A673 (cell line): ENCODE measurements at regions of chr6 and their contacts with region 1.

Region 1: DNA sequence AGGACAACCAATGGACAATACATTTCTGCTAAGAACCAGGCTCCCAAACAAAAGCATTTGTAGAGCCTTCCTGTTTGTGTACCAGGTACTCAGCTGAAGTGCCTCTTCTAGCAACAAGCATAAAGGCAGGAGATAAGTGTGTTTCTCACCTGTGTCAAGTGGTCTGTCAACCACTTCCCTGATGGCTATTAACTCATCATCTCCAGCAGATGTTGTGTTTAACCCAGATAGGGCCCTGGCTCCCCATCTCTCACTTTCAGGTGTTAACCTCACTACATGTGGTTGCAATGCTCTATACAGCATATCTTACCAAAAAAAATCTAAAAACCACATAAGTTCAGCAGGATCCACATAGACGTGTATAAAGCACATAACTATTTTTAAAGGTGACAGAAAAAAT is 9.6 kb upstream of the IL17A start:
- DNase-seq: no peak
- H3K4me3 ChIP-seq: no peak overlapping the region
- H3K27ac ChIP-seq: no peak overlapping the region
- H3K4me1 ChIP-seq: no peaks in the 10 kb centered on the region
- H3K27me3 ChIP-seq: no peaks in the 10 kb centered on the region
- CTCF ChIP-seq: no peak

Region 2: GRCh38 chr6:52115891-52116604 is 60.5 kb before region 1 on chr6:
- CTCF ChIA-PET with region 1: no interaction called
- POLR2A ChIA-PET with region 1: interaction called, 10 read pairs
- intact Hi-C with region 1: no loop called
- DNase-seq: peak; percentile 25
- H3K4me3 ChIP-seq: no peak overlapping the region
- H3K27ac ChIP-seq: peak overlapping the region; percentile 65
- H3K4me1 ChIP-seq: peaks cover 25% of the 10 kb centered on the region
- H3K27me3 ChIP-seq: no peaks in the 10 kb centered on the region
- CTCF ChIP-seq: no peak

Region 3: GRCh38 chr6:52438926-52439325 is 262.4 kb after region 1 on chr6:
- CTCF ChIA-PET with region 1: no interaction called
- POLR2A ChIA-PET with region 1: no interaction called
- intact Hi-C with region 1: no loop called
- DNase-seq: no peak
- H3K4me3 ChIP-seq: no peak overlapping the region
- H3K27ac ChIP-seq: no peak overlapping the region
- H3K4me1 ChIP-seq: no peaks in the 10 kb centered on the region
- H3K27me3 ChIP-seq: no peaks in the 10 kb centered on the region
- CTCF ChIP-seq: no peak